Heart left ventricle (tissue), 16 donors: ENCODE measurements at regions of chr17 and their contacts with region 1.

Region 1: DNA sequence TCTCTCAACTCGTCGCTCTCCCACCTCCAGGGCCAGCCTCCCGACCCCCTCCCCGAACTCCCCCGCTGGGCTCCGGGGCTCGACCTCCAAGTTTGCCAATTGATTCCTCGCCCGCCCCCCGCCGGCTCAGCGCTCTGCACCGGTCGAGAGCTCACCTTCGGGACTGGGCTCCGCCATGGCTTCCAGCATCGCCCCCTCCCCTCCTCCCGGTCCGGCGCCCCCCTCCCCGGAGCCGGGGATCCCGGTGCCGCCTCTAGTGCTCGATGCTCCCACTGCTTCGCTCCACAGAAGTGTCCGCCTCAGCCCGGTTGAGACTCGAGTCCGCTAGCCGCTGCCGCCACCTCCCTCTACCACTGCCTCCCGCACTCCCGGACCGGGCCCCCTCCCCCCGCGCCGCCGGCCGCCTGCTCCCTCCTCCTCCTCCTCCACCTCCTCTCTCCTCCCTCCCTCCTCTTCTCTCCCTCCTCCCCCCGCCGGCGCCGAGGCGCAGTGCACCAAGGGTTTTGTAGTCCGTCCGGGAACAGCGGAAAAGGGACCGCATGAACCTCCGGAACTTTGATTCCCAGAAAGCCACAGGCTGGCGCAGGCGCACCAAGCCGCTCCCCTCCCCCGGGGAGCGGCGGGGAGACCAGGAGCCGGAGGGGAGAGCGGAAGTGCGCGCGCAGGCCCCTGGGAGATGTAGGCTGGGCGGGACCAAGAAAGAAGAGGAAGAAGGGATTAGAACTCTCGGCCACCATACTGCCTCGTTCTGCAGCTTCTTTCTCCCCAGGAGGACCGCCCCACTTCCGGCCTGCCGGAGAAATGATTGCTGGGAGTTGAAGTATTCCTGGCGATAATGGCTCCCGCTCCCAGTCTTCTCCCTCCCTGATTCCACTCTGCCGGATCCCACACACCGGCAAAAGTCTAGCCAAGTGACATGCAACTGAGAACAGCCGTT is at the start of gene PHF23:
- DNase-seq: peak; percentile 99 to 100 (median 99)
- ATAC-seq: peak; percentile 79 to 86 (median 84)
- H3K4me3 ChIP-seq: peak within 1 kb of the TSS; percentile 66 to 98 (median 90)
- H3K27ac ChIP-seq: peak within 1 kb of the TSS; percentile 81 to 98 (median 94)
- H3K4me1 ChIP-seq: peaks cover 5 to 58% (median 40%) of the 10 kb centered on the region in 12 donors
- H3K27me3 ChIP-seq: no peaks in the 10 kb centered on the region
- CTCF ChIP-seq: peak in 1 of 12 donors; percentile 9
- POLR2A ChIP-seq: peak in 1 of 2 donors; percentile 56
- total RNA-seq, gene PHF23: 19.1 to 36.7 (median 23.0) TPM

Region 2: DNA sequence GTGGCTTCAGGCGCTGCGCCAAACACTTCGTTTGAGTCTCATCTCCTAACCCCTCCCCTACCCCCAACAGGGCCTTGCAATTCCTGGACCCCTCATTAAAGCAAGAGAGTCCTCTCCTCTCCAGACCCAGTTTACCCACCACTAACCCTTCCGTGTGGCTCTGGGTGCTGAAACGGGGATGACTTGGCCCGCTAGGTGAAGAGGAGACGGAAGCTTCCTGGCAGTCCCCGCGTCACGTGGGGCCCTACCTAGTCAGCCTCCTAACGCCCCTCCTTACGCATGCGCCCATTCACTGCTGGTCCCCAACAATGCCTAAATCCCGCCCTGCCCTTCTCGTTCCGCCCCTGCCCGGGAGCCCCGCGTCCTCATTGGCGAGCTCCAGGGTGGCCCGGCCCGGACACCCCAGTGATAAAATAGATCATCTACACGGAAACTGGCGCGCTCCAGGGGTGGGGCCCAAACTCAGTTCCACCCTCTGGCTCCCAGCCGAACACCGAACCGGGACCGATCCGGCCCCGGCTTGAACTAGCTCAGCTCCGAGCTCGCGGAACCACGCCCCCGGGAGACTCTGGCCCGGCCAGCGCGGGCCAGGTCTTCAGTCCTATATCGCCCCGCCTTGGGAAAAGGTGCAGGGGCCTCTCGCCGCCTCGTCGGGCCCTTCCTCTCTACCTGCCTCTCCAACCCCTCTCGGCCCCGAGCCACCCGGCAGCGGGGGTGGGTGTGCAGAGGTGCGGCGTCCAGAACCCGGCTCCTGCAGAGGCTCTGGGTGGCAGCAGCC is 203.6 kb before region 1 on chr17 and contains the start of gene SLC16A13:
- intact Hi-C with region 1: no loop called
- DNase-seq: peak; percentile 95 to 97 (median 95)
- ATAC-seq: peak; percentile 93 to 96 (median 96)
- H3K4me3 ChIP-seq: peak within 1 kb of the TSS; percentile 53 to 88 (median 67)
- H3K27ac ChIP-seq: peak within 1 kb of the TSS; percentile 74 to 97 (median 88)
- H3K4me1 ChIP-seq: peaks cover 0 to 25% (median 8%) of the 10 kb centered on the region in 12 donors
- H3K27me3 ChIP-seq: no peaks in the 10 kb centered on the region
- CTCF ChIP-seq: no peak
- POLR2A ChIP-seq: peak in 1 of 2 donors; percentile 64
- total RNA-seq, gene SLC16A13: 0.83 to 2.1 (median 1.1) TPM

Region 3: DNA sequence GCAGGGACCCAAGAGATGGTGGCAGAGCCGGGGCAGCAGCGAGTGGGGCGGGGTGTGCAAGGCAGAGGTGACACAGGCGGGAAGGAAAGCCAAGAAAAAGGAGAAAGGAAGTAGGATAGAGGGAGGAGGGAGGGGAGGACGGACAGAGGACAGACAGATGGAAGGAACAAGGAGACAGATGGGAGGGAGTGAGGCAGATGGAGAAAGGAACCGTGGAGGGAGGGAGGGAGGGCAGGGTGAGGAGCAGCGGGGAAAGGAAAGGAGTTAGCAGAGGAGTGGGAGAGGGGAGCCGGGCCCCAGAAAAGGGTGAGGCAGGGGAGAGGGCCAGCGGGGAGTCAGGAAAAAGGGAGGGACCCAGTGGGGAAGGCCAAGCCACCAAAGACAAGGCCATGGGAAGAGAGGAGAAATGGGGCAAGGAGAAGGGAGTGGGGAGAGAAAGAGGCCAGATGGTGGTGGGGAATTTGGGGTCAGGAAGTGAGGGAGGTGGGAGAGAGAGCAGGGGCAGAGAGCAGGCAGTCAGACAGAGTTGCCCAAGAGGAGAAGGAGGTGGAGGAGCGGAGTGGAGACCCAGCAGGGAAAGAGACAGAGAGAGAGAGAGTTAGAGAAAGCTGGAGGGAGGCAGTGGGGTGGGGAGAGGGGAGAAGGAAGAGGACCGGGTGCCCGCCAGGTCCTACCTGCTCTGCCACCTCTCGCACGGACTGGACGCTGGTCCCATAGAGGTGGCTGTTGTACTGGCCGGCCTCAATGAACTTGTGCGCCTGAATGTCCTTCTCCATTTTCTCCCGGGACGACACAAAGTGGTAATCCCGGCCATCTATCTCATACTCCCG is 46.9 kb before region 1 on chr17:
- intact Hi-C with region 1: no loop called
- DNase-seq: no peak
- ATAC-seq: no peak
- H3K4me3 ChIP-seq: no peak overlapping the region
- H3K27ac ChIP-seq: no peak overlapping the region
- H3K4me1 ChIP-seq: no peaks in the 10 kb centered on the region
- H3K27me3 ChIP-seq: no peaks in the 10 kb centered on the region
- CTCF ChIP-seq: no peak
- POLR2A ChIP-seq: no peak

Region 4: DNA sequence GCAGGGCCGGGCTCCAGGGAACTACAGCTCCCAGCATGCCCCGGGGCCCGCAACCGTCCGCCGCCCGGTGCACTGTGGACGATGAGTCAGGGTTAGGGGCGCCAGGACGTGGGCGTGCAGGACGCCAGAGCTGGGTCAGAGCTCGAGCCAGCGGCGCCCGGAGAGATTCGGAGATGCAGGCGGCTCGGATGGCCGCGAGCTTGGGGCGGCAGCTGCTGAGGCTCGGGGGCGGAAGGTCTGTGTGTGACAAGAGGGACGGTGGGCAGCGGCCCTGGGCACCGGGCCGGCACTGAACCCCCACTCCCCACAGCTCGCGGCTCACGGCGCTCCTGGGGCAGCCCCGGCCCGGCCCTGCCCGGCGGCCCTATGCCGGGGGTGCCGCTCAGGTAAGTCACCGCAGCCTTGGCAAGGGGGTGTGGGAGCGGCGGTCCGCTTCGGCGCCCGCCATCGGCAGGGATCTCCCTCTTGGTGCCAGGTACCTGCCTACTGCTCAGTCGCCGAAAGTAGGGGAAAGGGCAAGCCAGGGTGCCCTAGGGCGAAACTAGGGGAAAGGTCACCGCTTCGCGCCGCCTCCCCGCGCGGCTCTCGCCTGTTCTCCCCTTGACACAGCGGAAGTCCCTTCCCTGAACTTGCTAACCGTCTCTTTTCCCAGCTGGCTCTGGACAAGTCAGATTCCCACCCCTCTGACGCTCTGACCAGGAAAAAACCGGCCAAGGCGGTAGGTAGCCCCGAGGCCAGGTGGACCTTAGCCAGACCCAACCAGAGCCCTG is 19.4 kb before region 1 on chr17 and contains the starts of genes ACADVL and DLG4:
- intact Hi-C with region 1: loop called in 1 of 10 experiments (anchors 2 kb)
- DNase-seq: peak; percentile 94 to 97 (median 94)
- ATAC-seq: peak; percentile 73 to 87 (median 83)
- H3K4me3 ChIP-seq: peak within 1 kb of the TSS; percentile 69 to 100 (median 96)
- H3K27ac ChIP-seq: peak within 1 kb of the TSS; percentile 95 to 100 (median 98)
- H3K4me1 ChIP-seq: peaks cover 6 to 92% (median 52%) of the 10 kb centered on the region in 12 donors
- H3K27me3 ChIP-seq: no peaks in the 10 kb centered on the region
- CTCF ChIP-seq: no peak
- POLR2A ChIP-seq: peak in 1 of 2 donors; percentile 93
- total RNA-seq, gene ACADVL: 874 to 2,110 (median 1,385) TPM
- total RNA-seq, gene DLG4: 12.0 to 24.3 (median 16.6) TPM

Region 5: DNA sequence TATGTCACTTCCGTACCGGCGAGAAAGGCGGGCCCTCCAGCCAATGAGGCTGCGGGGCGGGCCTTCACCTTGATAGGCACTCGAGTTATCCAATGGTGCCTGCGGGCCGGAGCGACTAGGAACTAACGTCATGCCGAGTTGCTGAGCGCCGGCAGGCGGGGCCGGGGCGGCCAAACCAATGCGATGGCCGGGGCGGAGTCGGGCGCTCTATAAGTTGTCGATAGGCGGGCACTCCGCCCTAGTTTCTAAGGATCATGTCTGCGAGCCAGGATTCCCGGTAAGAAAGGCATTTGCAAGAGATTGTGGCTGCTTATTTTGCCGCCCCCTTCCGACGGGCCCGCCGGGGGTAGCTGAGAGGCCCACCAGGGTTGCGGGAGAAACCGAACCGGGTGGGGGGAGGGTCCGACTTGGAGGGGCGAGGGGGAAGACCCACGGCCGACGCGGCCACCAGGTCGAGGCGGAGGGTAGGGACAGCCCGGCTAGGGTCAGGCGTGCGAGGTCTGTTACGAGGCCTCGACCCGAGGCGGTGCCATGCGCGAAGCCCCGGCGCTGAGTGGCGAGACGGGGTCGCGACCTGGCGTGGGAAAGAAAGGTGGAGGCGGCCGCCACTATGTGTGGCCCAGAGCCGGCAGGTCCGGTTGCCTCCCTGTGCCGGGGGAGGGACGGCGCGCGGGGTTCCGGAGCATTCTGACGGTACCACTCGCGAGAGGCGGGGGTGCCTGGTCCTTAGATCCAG is 333.4 kb after region 1 on chr17:
- intact Hi-C with region 1: loop called in 2 of 10 experiments (anchors 10 kb)
- DNase-seq: peak; percentile 99 to 100 (median 99)
- ATAC-seq: peak; percentile 92 to 96 (median 96)
- H3K4me3 ChIP-seq: peak overlapping the region; percentile 77 to 100 (median 100)
- H3K27ac ChIP-seq: peak overlapping the region; percentile 80 to 100 (median 98)
- H3K4me1 ChIP-seq: peaks cover 4 to 50% (median 32%) of the 10 kb centered on the region in 12 donors
- H3K27me3 ChIP-seq: no peaks in the 10 kb centered on the region
- CTCF ChIP-seq: no peak
- POLR2A ChIP-seq: peak; percentile 95 to 99